Mammary epithelial cell (primary cell): ENCODE measurements at regions of chr22 and their contacts with region 1.

Region 1: GRCh38 chr22:37566903-37567820 is 6.9 kb downstream of the CDC42EP1 start:
- DNase-seq: peak; percentile 92
- H3K4me3 ChIP-seq: no peak overlapping the region
- H3K27ac ChIP-seq: peak overlapping the region; percentile 33
- H3K4me1 ChIP-seq: peaks cover 42% of the 10 kb centered on the region
- H3K27me3 ChIP-seq: no peaks in the 10 kb centered on the region
- CTCF ChIP-seq: peak; percentile 87 to 97

Region 2: GRCh38 chr22:37316875-37317371 is 250.2 kb before region 1 on chr22:
- CTCF ChIA-PET with region 1: no interaction called
- dilution Hi-C with region 1: loop called (anchors 5 kb)
- in situ Hi-C with region 1: no loop called
- intact Hi-C with region 1: loop called (anchors 10 kb)
- DNase-seq: peak; percentile 87
- H3K4me3 ChIP-seq: no peak overlapping the region
- H3K27ac ChIP-seq: no peak overlapping the region
- H3K4me1 ChIP-seq: peaks cover 48% of the 10 kb centered on the region
- H3K27me3 ChIP-seq: no peaks in the 10 kb centered on the region
- CTCF ChIP-seq: peak; percentile 97 to 99

Region 3: GRCh38 chr22:37472418-37473006 is 94.7 kb before region 1 on chr22:
- CTCF ChIA-PET with region 1: no interaction called
- dilution Hi-C with region 1: no loop called
- in situ Hi-C with region 1: no loop called
- intact Hi-C with region 1: loop called (anchors 1 kb)
- DNase-seq: no peak
- H3K4me3 ChIP-seq: no peak overlapping the region
- H3K27ac ChIP-seq: no peak overlapping the region
- H3K4me1 ChIP-seq: no peaks in the 10 kb centered on the region
- H3K27me3 ChIP-seq: no peaks in the 10 kb centered on the region
- CTCF ChIP-seq: peak; percentile 54 to 76

Region 4: GRCh38 chr22:37538590-37539357 is 28.4 kb before region 1 on chr22:
- CTCF ChIA-PET with region 1: interaction called, 5 read pairs
- dilution Hi-C with region 1: loop called (anchors 5 kb)
- in situ Hi-C with region 1: loop called in 1 of 2 experiments (anchors 5 kb)
- intact Hi-C with region 1: loop called (anchors 1 kb)
- DNase-seq: peak; percentile 90
- H3K4me3 ChIP-seq: peak overlapping the region in 1 of 3 experiments; percentile 5
- H3K27ac ChIP-seq: peak overlapping the region; percentile 26
- H3K4me1 ChIP-seq: peaks cover 37% of the 10 kb centered on the region
- H3K27me3 ChIP-seq: no peaks in the 10 kb centered on the region
- CTCF ChIP-seq: peak; percentile 95 to 96

Region 5: DNA sequence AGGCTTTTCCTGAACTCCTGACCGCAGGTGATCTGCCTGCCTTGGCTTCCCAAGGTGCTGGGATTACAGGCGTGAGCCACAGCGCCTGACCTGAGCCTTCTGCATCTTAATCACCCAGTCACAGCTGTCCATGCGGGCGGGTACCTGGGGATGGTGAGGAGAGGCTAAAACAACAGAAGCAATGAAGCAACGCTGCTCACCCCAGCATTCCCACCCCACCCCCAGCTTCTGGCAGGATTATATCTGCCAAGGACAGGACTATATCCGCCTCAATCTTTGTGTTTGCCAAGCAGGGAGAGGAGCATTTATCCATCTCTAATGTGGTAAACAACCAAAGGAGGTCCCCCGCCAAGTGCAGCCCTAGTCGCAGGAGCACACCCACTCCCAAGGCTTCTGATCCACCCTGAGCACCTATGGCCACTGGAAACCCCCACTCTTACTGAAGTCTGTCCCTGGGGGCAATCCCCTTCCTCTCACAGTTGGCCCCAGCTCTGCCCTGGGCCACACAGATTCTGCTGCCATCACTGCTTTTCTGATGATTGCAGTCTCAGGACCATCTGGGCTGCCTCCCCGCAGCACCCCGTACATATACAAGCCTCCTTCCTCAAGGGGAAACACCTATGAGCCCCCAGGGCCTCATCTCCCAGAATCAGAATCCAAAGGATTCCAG is 21.5 kb after region 1 on chr22:
- CTCF ChIA-PET with region 1: interaction called, 20 read pairs
- dilution Hi-C with region 1: no loop called
- in situ Hi-C with region 1: no loop called
- intact Hi-C with region 1: loop called (anchors 2 kb)
- DNase-seq: no peak
- H3K4me3 ChIP-seq: no peak overlapping the region
- H3K27ac ChIP-seq: no peak overlapping the region
- H3K4me1 ChIP-seq: no peaks in the 10 kb centered on the region
- H3K27me3 ChIP-seq: peaks cover under 1% of the 10 kb centered on the region
- CTCF ChIP-seq: no peak

Region 6: DNA sequence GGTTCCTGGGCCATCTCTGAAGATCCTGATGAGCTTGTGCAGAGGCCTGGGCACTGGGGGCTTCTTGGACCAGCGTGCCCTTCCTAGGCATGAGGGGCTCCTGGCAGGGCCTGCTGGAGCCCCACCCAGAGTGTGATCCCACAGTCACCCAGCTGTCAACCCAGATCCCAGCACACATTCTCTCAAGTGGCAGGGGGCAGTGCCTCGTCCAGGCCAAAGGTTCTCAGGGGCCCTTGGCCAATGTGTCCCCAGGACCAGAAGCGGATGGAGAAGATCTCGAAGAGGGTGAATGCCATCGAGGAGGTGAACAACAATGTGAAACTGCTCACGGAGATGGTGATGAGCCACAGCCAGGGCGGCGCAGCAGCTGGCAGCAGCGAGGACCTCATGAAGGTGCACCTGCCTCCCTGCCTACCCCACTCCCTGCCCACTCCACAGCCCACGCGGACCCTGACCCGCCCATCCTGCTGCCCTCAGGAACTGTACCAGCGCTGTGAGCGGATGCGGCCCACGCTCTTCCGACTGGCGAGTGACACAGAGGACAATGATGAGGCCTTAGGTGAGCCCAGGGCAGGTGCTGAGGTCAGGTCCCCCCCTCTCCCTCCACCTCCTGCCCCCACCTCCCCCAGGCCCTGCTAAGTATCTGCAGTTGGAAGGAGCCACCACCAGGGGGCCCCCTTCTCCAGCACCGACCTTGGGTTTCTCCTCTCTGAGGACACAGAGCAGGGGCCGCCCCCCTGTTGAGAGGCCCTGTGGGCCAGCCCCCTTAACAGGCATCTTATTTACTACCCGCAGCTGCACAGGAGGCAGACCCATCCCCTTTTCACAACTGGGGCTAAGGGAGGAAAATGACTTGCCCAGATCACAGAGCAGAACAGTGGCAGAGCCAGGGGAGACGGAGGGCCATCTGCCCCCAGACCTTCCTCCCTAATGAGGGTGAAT is 56.2 kb after region 1 on chr22:
- CTCF ChIA-PET with region 1: no interaction called
- dilution Hi-C with region 1: loop called (anchors 5 kb)
- in situ Hi-C with region 1: no loop called
- intact Hi-C with region 1: no loop called
- DNase-seq: no peak
- H3K4me3 ChIP-seq: no peak overlapping the region
- H3K27ac ChIP-seq: no peak overlapping the region
- H3K4me1 ChIP-seq: no peaks in the 10 kb centered on the region
- H3K27me3 ChIP-seq: no peaks in the 10 kb centered on the region
- CTCF ChIP-seq: peak; percentile 53 to 78